BJ (cell line): ENCODE measurements at regions of chr1 and their contacts with region 1.

Region 1: GRCh38 chr1:101238681-101239094 is 1.9 kb downstream of the S1PR1 start:
- DNase-seq: no peak
- H3K4me3 ChIP-seq: peak overlapping the region; percentile 72; the same call in 1 of the 2 replicates
- H3K27me3 ChIP-seq: no peaks in the 10 kb centered on the region
- CTCF ChIP-seq: peak; percentile 98

Region 2: DNA sequence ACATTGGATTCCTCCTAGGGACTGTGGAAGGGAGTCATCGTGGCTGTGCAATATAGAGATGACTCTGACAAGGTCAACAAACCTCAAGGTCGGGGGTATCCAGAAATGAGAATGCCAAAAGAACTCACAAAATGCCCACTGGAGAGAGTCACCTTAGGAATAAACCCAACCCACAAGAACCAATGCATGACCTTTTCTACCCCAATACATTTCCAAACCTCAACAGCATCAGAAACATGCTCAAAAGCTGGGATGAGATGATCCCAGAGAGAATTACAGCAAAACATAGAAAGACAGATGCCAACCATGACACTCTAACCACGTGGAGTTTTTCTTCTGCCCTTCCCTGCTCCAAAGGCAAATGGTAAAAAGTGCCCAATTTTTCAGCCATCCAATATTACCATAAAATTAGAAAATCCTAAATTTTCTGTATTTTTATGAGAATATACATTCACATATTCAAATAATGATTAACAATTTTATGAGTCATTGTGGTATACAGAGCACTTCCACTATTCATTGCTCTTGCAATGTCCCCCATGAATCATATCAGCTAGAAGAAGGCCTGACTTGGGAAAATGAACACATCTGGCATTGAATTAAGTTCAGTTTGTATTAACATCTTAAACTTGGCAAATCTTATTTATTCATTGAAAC is 1681.0 kb before region 1 on chr1:
- CTCF ChIA-PET with region 1: interaction called, 4 read pairs
- POLR2A ChIA-PET with region 1: interaction called, 16 read pairs
- DNase-seq: peak; percentile 32
- H3K4me3 ChIP-seq: no peak overlapping the region
- H3K27me3 ChIP-seq: no peaks in the 10 kb centered on the region
- CTCF ChIP-seq: no peak

Region 3: GRCh38 chr1:100909018-100909417 is 329.7 kb before region 1 on chr1:
- CTCF ChIA-PET with region 1: interaction called, 10 read pairs
- POLR2A ChIA-PET with region 1: no interaction called
- DNase-seq: no peak
- H3K4me3 ChIP-seq: no peak overlapping the region
- H3K27me3 ChIP-seq: no peaks in the 10 kb centered on the region
- CTCF ChIP-seq: no peak

Region 4: DNA sequence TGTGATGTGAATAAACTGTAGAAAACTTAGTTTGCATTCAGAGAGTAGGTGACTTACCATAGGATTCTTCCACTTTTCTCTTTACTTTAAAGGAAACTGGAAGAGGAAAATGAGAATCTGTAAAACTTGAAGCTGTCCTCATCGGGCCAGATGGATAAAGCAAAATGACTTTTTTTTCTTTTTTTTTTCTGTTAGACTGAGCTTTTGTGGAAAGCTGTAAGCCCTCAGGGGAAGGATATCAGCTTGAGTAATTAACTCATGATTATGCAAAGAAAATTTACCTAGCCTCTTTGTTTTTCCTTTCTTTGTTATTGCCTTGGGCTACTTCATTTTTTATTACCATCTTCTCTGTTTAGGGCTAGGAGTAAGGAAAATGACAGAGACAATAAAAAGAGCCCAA is 266.5 kb before region 1 on chr1:
- CTCF ChIA-PET with region 1: no interaction called
- POLR2A ChIA-PET with region 1: no interaction called
- DNase-seq: no peak
- H3K4me3 ChIP-seq: no peak overlapping the region
- H3K27me3 ChIP-seq: no peaks in the 10 kb centered on the region
- CTCF ChIP-seq: no peak

Region 5: DNA sequence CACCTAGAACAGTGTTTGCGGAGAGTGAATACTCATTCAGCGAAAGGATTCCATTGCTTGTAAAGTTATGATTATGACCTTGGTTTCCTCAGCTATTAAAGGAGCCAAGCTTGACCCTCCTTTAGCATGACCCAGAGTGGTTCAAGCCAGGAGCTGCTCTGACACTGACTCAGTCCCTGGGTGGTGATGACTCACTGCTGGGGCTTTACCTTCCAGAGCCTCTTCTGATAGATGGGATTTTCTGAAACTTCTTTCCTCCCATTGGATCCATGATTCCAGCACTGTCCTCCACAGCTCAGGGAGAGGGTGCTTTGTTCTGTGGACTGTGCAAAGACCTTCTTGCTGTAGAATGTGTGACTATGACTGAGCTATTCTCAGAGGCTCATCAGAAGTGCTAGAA is 75.6 kb after region 1 on chr1:
- CTCF ChIA-PET with region 1: no interaction called
- POLR2A ChIA-PET with region 1: no interaction called
- DNase-seq: no peak
- H3K4me3 ChIP-seq: no peak overlapping the region
- H3K27me3 ChIP-seq: peaks cover 16% of the 10 kb centered on the region
- CTCF ChIP-seq: no peak

Region 6: GRCh38 chr1:101420406-101420805 is 181.7 kb after region 1 on chr1:
- CTCF ChIA-PET with region 1: no interaction called
- POLR2A ChIA-PET with region 1: no interaction called
- DNase-seq: no peak
- H3K4me3 ChIP-seq: no peak overlapping the region
- H3K27me3 ChIP-seq: no peaks in the 10 kb centered on the region
- CTCF ChIP-seq: no peak